Tibial artery (tissue), 4 donors: ENCODE measurements at regions of chr6 and their contacts with region 1.

Region 1: DNA sequence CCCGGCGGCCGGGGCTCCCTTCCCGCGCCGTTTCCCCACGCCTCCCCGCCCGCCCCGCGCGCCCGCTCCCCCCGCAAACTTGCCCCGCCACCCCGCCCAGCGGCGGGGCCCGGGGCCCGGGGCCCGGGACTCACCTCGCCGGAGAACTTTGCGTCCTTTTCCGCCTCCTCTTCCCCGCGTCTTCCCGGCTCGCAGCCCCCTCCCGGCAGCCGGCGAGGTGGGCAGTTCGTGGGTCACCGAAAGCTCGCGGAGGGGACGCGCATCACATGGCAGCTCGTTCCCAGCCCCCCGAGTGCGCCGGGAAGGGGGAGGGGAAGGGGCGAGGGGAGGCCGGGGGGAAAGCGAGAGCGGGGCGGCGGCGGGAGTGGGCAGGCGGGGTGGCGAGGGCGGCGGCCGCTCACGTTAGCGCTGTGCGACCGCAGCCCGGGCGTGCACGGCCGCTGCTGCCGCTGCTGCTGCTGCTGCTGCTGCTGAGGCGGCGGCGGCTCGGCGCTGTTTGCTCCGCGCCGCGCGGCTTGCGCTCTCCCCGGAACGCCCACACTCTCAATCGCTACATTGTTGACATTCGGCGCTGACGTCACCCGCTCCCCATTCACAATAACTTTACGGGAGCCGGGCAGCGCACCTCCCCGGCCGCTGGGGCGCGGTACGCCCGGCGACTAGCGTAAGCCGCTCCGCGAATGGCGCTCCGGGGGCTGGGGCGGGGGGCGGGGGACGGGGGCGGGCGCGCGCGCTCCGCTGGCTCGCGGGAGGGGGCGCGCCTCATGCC is at the start of gene BACH2:
- DNase-seq: peak; percentile 89 to 91
- H3K4me3 ChIP-seq: peak within 1 kb of the TSS; percentile 68 to 77
- H3K27ac ChIP-seq: peak within 1 kb of the TSS; percentile 74
- H3K4me1 ChIP-seq: peaks cover 0 to 25% (median 9%) of the 10 kb centered on the region in 4 donors
- H3K27me3 ChIP-seq: no peaks in the 10 kb centered on the region
- CTCF ChIP-seq: no peak

Region 2: GRCh38 chr6:89597988-89598692 is 698.4 kb before region 1 on chr6:
- intact Hi-C with region 1: no loop called
- DNase-seq: no peak
- H3K4me3 ChIP-seq: no peak overlapping the region
- H3K27ac ChIP-seq: peak overlapping the region; percentile 26 to 34
- H3K4me1 ChIP-seq: peaks cover 0 to 33% (median 0%) of the 10 kb centered on the region in 4 donors
- H3K27me3 ChIP-seq: no peaks in the 10 kb centered on the region
- CTCF ChIP-seq: peak; percentile 34 to 64

Region 3: GRCh38 chr6:89970609-89971337 is 325.8 kb before region 1 on chr6:
- intact Hi-C with region 1: loop called (anchors 10 kb)
- DNase-seq: no peak
- H3K4me3 ChIP-seq: no peak overlapping the region
- H3K27ac ChIP-seq: no peak overlapping the region
- H3K4me1 ChIP-seq: no peaks in the 10 kb centered on the region
- H3K27me3 ChIP-seq: no peaks in the 10 kb centered on the region
- CTCF ChIP-seq: peak; percentile 42 to 73

Region 4: DNA sequence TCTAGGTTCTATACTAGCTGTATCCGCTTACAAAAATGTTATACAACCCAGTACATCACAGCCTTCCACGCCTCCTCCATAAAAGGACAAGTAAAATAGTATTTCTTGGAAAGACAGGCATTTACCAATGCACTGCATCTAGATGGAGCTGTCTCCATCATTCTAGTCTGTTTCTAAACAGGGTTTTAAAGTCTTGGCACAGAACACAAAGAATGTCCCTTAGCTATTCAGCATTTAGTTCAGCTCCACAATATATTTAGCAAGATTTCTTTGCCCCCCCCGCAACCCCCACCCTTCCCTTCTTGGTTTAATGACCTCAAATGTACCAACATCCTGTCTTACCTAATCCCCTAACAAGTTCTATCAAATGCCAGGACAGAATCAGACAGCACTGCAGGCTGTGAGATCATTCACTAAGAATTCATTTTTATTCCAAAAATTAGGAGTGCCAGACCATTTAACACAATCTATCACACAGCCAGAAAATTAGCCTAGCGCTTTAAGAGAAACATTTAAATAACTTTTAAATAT is 198.5 kb before region 1 on chr6:
- intact Hi-C with region 1: loop called (anchors 5 kb)
- DNase-seq: peak; percentile 91 to 95
- H3K4me3 ChIP-seq: no peak overlapping the region
- H3K27ac ChIP-seq: peak overlapping the region; percentile 70 to 83
- H3K4me1 ChIP-seq: peaks cover 0 to 53% (median 27%) of the 10 kb centered on the region in 4 donors
- H3K27me3 ChIP-seq: no peaks in the 10 kb centered on the region
- CTCF ChIP-seq: peak; percentile 43 to 52

Region 5: DNA sequence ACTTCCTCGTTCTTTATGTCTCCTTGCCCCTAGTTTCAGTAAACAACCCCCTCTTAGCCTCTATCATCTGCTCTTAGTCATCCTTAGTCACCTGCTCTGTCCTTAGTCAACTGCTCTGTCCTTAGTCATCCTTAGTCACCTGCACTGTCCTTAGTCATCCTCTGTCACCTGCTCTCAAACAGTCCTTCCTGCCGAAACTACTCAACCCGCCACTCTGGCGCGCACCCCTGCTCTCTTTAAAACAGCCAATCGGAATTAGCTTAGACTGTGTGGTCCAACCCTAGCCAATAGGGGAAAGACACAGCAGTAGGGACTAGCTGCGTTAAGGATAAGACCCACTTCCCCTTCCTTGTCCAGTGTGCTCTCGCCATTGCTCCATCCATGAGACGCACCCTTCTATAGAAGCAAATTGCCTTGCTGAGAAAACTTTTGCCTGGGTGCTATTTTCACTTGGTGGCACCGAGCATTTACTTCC is 73.8 kb before region 1 on chr6:
- intact Hi-C with region 1: loop called (anchors 10 kb)
- DNase-seq: no peak
- H3K4me3 ChIP-seq: no peak overlapping the region
- H3K27ac ChIP-seq: no peak overlapping the region
- H3K4me1 ChIP-seq: peaks cover 0 to 17% (median 11%) of the 10 kb centered on the region in 4 donors
- H3K27me3 ChIP-seq: no peaks in the 10 kb centered on the region
- CTCF ChIP-seq: no peak

Region 6: DNA sequence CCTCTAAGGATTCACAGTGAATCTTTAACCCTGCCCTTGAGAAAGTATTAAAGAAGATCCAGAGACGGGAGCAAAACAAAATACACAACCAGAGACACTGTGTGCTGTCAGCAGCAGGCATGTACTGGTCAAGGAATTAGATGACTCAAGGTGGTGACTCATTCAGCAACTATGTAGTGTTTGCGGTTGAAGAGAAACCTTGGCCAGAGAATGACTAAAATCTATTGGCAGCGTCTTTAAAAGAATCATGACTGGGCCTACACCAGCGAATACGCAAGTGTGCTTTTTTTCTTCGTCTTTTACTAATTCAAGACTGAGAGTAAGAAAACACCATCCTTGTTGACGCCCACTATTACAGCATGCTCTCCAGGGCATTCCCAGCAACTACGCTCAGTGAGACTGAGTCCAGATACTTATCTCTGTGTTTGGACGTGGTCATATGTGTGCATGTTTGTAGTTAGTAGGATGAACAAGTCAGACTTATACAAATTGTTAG is 72.5 kb after region 1 on chr6:
- intact Hi-C with region 1: loop called (anchors 10 kb)
- DNase-seq: peak; percentile 82 to 86
- H3K4me3 ChIP-seq: no peak overlapping the region
- H3K27ac ChIP-seq: peak overlapping the region; percentile 35 to 38
- H3K4me1 ChIP-seq: peaks cover 0 to 15% (median 5%) of the 10 kb centered on the region in 4 donors
- H3K27me3 ChIP-seq: no peaks in the 10 kb centered on the region
- CTCF ChIP-seq: no peak